Activated CD4-positive, alpha-beta T cell treated with anti-CD3 and anti-CD28 coated beads for 36 hours (primary cell): ENCODE measurements at regions of chr5 and their contacts with region 1.

Region 1: DNA sequence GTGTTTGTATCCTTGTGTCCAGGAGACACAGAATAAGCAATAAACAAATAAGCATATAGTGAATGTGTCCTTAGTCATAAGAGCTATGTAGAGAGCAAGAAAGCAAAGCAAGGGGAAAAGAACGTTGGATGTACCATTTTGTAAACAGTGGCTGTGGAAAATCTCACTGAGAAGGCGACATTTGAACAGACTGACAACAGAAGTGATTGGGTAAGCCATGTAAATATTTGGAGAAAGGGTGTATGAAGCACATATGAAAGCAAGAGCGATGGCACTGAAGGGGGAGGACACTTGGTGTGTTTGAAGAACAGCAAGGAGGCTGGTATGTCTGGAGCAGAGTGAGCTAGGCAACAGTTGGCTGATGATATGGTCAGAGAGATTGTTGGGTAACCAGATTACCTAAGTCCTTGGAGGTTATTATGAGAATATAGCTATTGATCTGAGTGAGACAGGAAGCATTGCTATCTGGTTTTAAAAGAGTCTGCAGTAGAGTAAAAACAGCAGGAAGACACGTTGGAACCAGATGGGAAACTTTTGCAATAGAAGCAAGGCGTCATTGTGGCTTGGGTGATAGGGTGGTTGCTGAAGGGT is 115.5 kb upstream of the IL7R start:
- DNase-seq: no peak
- ATAC-seq: peak; percentile 57
- H3K4me3 Mint-ChIP-seq: no peak overlapping the region
- H3K27ac Mint-ChIP-seq: peak overlapping the region; percentile 73
- H3K4me1 Mint-ChIP-seq: peaks cover 65% of the 10 kb centered on the region
- H3K27me3 Mint-ChIP-seq: no peaks in the 10 kb centered on the region

Region 2: GRCh38 chr5:34686762-34687268 is 1054.4 kb before region 1 on chr5:
- CTCF ChIA-PET with region 1: no interaction called
- POLR2A ChIA-PET with region 1: no interaction called
- intact Hi-C with region 1: no loop called
- DNase-seq: no peak
- ATAC-seq: no peak
- H3K4me3 Mint-ChIP-seq: no peak overlapping the region
- H3K27ac Mint-ChIP-seq: no peak overlapping the region
- H3K4me1 Mint-ChIP-seq: peaks cover 19% of the 10 kb centered on the region
- H3K27me3 Mint-ChIP-seq: no peaks in the 10 kb centered on the region

Region 3: GRCh38 chr5:35319333-35320002 is 421.8 kb before region 1 on chr5:
- CTCF ChIA-PET with region 1: no interaction called
- POLR2A ChIA-PET with region 1: no interaction called
- intact Hi-C with region 1: loop called in 1 of 2 experiments (anchors 1 kb)
- DNase-seq: peak; percentile 92
- ATAC-seq: peak; percentile 91
- H3K4me3 Mint-ChIP-seq: no peak overlapping the region
- H3K27ac Mint-ChIP-seq: no peak overlapping the region
- H3K4me1 Mint-ChIP-seq: peaks cover 30% of the 10 kb centered on the region
- H3K27me3 Mint-ChIP-seq: peaks cover 14% of the 10 kb centered on the region

Region 4: GRCh38 chr5:35665096-35665495 is 76.1 kb before region 1 on chr5:
- CTCF ChIA-PET with region 1: interaction called, 3 read pairs
- POLR2A ChIA-PET with region 1: no interaction called
- intact Hi-C with region 1: loop called (anchors 2 to 5 kb)
- DNase-seq: no peak
- ATAC-seq: no peak
- H3K4me3 Mint-ChIP-seq: no peak overlapping the region
- H3K27ac Mint-ChIP-seq: peak overlapping the region; percentile 7
- H3K4me1 Mint-ChIP-seq: peaks cover 55% of the 10 kb centered on the region
- H3K27me3 Mint-ChIP-seq: no peaks in the 10 kb centered on the region

Region 5: GRCh38 chr5:35777358-35778087 is 36.3 kb after region 1 on chr5:
- CTCF ChIA-PET with region 1: interaction called, 4 read pairs
- POLR2A ChIA-PET with region 1: no interaction called
- intact Hi-C with region 1: loop called (anchors 2 to 5 kb)
- DNase-seq: peak; percentile 86
- ATAC-seq: peak; percentile 33
- H3K4me3 Mint-ChIP-seq: peak overlapping the region; percentile 17
- H3K27ac Mint-ChIP-seq: peak overlapping the region; percentile 79
- H3K4me1 Mint-ChIP-seq: peaks cover 84% of the 10 kb centered on the region
- H3K27me3 Mint-ChIP-seq: no peaks in the 10 kb centered on the region

Region 6: DNA sequence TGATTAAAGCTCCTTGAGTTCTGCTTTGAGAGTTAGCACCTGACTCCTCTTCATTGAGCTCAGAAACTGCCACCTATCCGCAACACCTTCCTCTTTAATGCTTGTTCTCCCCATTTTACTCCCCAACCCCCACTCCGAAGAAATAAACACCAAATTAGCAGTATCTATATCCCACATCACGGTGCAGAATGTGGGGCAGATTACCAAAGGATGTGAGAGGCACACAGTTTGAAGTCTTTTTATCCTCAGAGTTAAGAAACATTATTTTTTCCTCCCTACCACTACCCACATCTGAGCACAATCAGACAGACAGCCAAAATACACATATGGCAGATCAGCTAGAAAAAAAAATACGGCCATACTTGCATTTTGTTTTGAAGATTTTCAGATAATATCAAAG is 89.4 kb after region 1 on chr5:
- CTCF ChIA-PET with region 1: no interaction called
- POLR2A ChIA-PET with region 1: no interaction called
- intact Hi-C with region 1: loop called (anchors 5 kb)
- DNase-seq: no peak
- ATAC-seq: peak; percentile 8
- H3K4me3 Mint-ChIP-seq: peak overlapping the region; percentile 30
- H3K27ac Mint-ChIP-seq: peak overlapping the region; percentile 91
- H3K4me1 Mint-ChIP-seq: peaks cover 93% of the 10 kb centered on the region
- H3K27me3 Mint-ChIP-seq: no peaks in the 10 kb centered on the region

Region 7: DNA sequence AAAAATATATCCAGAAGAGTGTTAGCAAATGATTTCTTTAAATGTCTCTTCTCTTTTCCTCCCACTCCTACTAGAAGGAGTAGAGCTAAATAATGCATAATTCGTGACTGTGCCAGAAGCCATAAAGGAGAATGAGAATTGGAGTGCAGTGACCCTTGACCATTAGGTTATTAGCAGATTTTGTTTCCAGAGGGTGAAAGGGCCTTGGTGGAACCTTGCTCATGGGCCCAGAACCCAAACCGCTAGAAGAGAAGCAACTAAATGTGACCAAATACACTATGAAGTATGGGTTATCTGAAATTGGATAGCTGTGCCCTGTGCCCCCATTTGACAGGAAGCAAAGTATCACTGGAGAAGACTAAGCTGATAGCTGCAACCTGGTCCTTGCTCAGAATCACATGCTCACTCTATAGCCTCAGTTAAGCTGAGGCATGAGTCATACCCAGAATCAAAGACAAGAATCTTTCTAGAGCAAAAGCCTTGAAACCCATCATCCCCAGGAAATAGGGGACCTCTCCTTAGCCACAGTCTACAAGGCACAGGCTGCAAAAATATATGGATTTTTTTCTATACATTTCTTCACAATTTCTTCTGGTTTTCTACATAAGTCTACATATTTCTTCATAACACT is 160.9 kb after region 1 on chr5:
- CTCF ChIA-PET with region 1: interaction called, 3 read pairs
- POLR2A ChIA-PET with region 1: no interaction called
- intact Hi-C with region 1: loop called in 1 of 2 experiments (anchors 1 kb)
- DNase-seq: peak; percentile 42
- ATAC-seq: peak; percentile 60
- H3K4me3 Mint-ChIP-seq: peak overlapping the region; percentile 5
- H3K27ac Mint-ChIP-seq: peak overlapping the region; percentile 81
- H3K4me1 Mint-ChIP-seq: peaks cover 85% of the 10 kb centered on the region
- H3K27me3 Mint-ChIP-seq: no peaks in the 10 kb centered on the region